Thyroid gland (tissue), 4 donors: ENCODE measurements at regions of chr2 and their contacts with region 1.

Region 1: GRCh38 chr2:855147-855546 is 95.5 kb upstream of the SNTG2 start:
- DNase-seq: no peak
- H3K4me3 ChIP-seq: no peak overlapping the region
- H3K27ac ChIP-seq: no peak overlapping the region
- H3K4me1 ChIP-seq: peaks cover 0 to 14% of the 10 kb centered on the region in 2 donors
- H3K27me3 ChIP-seq: no peaks in the 10 kb centered on the region
- CTCF ChIP-seq: no peak
- POLR2A ChIP-seq: no peak

Region 2: DNA sequence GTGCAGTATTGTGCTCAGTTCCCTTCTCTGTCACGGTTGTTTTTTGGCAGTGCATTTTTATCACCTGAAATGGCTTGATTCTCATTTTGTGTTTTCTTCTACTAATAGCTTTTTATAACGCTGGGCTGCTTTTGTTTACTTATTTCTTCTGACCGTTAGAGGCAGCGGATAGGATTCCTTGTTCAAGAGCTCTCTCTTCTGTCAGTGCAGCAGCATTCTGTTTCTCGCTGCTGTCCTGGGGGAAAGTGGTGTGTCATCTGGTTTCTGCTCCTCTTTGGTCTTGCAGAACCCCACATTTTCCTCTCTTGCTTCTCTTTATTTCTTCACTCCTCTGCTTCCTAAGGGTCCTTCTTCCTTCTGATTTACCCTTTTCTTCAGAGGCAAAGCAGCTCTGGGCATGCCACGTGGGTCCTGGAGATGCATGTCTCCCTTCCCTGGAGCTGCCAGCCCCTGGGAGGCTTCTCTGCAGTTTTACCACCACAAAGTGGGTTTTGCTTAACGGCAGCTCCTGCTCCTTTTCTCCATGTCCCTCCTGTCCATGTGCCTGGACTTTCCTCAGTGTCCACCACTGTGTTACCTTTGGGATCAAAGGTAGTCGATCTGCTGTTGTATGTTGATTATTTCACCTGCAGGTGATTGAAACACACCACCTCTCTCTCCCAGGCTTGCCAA is 48.2 kb after region 1 on chr2:
- intact Hi-C with region 1: loop called (anchors 5 kb)
- DNase-seq: no peak
- H3K4me3 ChIP-seq: no peak overlapping the region
- H3K27ac ChIP-seq: no peak overlapping the region
- H3K4me1 ChIP-seq: no peaks in the 10 kb centered on the region
- H3K27me3 ChIP-seq: no peaks in the 10 kb centered on the region
- CTCF ChIP-seq: peak in 2 of 6 experiments; percentile 22 to 25
- POLR2A ChIP-seq: no peak